ENCODE measurements at regions of chr1 and their contacts with region 1.

Region 1: GRCh38 chr1:145891587-145892485 is 6.2 kb upstream of the ANKRD35 start:
- DNase-seq: peak; percentile 98
- ATAC-seq: peak; percentile 100
- H3K4me3 Mint-ChIP-seq: peak overlapping the region; percentile 62
- H3K27ac Mint-ChIP-seq: peak overlapping the region; percentile 95
- H3K4me1 Mint-ChIP-seq: peaks cover 25% of the 10 kb centered on the region
- H3K27me3 Mint-ChIP-seq: peaks cover 15% of the 10 kb centered on the region
- CTCF ChIP-seq: peak; percentile 85

Region 2: GRCh38 chr1:145740266-145740665 is 151.6 kb before region 1 on chr1:
- CTCF ChIA-PET with region 1: no interaction called
- POLR2A ChIA-PET with region 1: no interaction called
- DNase-seq: no peak
- ATAC-seq: no peak
- H3K4me3 Mint-ChIP-seq: no peak overlapping the region
- H3K27ac Mint-ChIP-seq: no peak overlapping the region
- H3K4me1 Mint-ChIP-seq: no peaks in the 10 kb centered on the region
- H3K27me3 Mint-ChIP-seq: no peaks in the 10 kb centered on the region
- CTCF ChIP-seq: no peak

Region 3: DNA sequence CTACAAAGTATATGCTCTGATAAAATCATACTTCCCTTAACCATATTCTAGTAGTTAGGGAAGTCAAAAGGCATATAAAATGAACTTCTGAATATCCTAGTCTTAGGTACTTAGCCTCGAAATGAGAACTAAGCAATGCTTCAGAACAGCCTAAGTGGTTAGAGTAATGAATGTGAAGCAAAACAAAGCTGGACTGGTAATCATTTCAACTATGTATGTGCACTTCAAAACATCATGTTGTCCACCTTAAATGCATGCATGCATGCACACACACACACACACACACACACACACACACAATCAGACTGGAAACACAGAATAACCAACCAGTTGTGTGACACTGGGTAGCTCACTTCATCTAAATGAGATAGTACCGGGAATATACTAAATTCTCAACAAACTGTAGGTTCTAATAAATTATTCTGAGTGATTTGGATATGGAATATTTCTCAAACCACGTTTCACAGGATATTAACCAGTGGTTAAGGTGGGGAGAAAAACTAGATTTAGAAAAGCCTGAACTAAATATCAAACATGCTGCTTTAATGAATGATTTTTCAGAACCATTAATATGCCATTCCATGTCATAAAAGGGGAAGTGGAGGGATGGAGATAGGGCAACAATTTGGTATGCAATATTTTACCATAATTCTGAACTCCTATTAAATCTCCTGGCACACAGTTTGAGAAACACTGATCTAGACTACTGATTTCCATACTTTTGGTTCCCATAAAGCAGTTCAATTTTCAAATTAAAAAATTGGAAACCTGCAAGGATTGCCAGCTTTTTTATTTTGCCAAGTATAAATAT is 87.4 kb before region 1 on chr1:
- CTCF ChIA-PET with region 1: no interaction called
- POLR2A ChIA-PET with region 1: no interaction called
- DNase-seq: no peak
- ATAC-seq: no peak
- H3K4me3 Mint-ChIP-seq: no peak overlapping the region
- H3K27ac Mint-ChIP-seq: peak overlapping the region; percentile 48; the same call in 1 of the 2 replicates
- H3K4me1 Mint-ChIP-seq: peaks cover 36% of the 10 kb centered on the region
- H3K27me3 Mint-ChIP-seq: no peaks in the 10 kb centered on the region; the same call in 1 of the 2 replicates
- CTCF ChIP-seq: no peak

Region 4: GRCh38 chr1:145823565-145824498 is 68.0 kb before region 1 on chr1 and contains the starts of genes POLR3C and RNF115:
- CTCF ChIA-PET with region 1: no interaction called
- POLR2A ChIA-PET with region 1: no interaction called
- DNase-seq: peak; percentile 92
- ATAC-seq: peak; percentile 95
- H3K4me3 Mint-ChIP-seq: peak within 1 kb of the TSS; percentile 93
- H3K27ac Mint-ChIP-seq: peak within 1 kb of the TSS; percentile 99
- H3K4me1 Mint-ChIP-seq: peaks cover 5% of the 10 kb centered on the region
- H3K27me3 Mint-ChIP-seq: no peaks in the 10 kb centered on the region
- CTCF ChIP-seq: no peak
- total RNA-seq, gene POLR3C: 20.2 to 24.9 TPM (median 22.7 TPM) in 3 replicates
- total RNA-seq, gene RNF115: 8.1 to 9.2 TPM (median 9.0 TPM) in 3 replicates

Region 5: DNA sequence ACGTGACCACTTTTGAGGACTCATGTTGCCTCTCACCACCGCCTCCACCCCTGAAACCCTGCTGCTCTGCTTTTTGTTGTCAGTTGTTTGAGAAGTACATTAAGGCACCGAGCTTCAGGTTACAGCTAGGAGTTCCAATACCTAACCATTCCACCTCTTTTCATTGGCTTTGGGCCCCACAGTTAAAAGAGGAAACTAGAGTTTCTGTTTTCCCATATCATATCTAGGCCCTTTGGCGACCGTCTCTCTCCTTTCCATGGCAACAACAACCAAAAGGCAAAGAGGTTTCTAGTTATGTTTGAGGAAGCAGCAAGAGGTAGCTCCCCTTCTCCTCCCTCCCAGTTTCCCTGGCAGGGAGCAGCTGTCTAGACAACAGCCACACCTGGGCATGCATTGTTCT is 12.1 kb before region 1 on chr1:
- CTCF ChIA-PET with region 1: interaction called, 45 read pairs
- POLR2A ChIA-PET with region 1: no interaction called
- DNase-seq: no peak
- ATAC-seq: peak; percentile 73
- H3K4me3 Mint-ChIP-seq: no peak overlapping the region
- H3K27ac Mint-ChIP-seq: peak overlapping the region; percentile 76
- H3K4me1 Mint-ChIP-seq: peaks cover 21% of the 10 kb centered on the region
- H3K27me3 Mint-ChIP-seq: peaks cover 36% of the 10 kb centered on the region
- CTCF ChIP-seq: no peak

Region 6: DNA sequence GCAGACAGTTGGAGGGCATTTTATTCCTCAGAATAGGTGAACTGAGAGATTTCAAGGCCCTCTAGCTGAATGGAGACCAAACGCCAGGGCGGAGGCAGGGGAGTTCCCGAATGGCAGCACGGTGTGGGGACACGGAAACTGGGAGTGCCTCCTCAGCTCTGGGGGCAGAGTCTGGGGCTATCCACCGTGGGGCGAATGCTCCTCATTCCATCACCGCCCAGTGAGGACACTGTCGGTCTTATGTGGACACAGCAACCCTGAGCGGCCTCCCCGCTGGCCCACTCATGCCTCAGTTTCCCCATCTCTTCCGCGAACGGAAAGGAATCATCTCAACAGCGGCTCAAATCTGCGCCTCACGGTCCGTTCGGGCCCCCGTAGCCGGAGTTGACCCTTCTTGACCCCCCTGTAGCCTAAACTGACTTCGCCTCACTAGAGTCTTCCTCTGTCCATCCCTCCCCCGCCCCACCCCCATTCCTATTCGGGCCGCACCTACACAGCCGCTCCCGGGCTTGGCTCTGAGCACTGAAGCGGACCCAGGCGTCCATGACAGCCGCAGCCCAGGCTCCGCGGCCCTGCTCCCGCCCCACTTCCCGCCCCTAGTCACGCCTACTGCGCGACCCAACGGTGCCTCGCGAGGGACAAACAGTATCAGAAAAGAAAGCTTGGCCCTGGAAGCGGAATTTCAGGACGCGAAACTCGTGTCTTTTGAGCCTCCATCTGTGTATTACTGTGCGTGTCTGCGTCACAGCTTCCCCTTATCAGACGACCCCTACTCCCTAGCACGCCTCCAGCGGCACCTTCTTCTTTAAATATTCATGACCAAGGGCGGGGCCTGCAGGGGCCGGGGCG is 26.5 kb after region 1 on chr1 and contains the start of gene PEX11B:
- CTCF ChIA-PET with region 1: interaction called, 17 read pairs
- POLR2A ChIA-PET with region 1: no interaction called
- DNase-seq: peak; percentile 87
- ATAC-seq: peak; percentile 89
- H3K4me3 Mint-ChIP-seq: peak within 1 kb of the TSS; percentile 86
- H3K27ac Mint-ChIP-seq: peak within 1 kb of the TSS; percentile 78
- H3K4me1 Mint-ChIP-seq: peaks cover 19% of the 10 kb centered on the region
- H3K27me3 Mint-ChIP-seq: peaks cover 10% of the 10 kb centered on the region
- CTCF ChIP-seq: no peak
- total RNA-seq, gene PEX11B: 10.9 to 12.5 TPM (median 11.8 TPM) in 3 replicates

Region 7: DNA sequence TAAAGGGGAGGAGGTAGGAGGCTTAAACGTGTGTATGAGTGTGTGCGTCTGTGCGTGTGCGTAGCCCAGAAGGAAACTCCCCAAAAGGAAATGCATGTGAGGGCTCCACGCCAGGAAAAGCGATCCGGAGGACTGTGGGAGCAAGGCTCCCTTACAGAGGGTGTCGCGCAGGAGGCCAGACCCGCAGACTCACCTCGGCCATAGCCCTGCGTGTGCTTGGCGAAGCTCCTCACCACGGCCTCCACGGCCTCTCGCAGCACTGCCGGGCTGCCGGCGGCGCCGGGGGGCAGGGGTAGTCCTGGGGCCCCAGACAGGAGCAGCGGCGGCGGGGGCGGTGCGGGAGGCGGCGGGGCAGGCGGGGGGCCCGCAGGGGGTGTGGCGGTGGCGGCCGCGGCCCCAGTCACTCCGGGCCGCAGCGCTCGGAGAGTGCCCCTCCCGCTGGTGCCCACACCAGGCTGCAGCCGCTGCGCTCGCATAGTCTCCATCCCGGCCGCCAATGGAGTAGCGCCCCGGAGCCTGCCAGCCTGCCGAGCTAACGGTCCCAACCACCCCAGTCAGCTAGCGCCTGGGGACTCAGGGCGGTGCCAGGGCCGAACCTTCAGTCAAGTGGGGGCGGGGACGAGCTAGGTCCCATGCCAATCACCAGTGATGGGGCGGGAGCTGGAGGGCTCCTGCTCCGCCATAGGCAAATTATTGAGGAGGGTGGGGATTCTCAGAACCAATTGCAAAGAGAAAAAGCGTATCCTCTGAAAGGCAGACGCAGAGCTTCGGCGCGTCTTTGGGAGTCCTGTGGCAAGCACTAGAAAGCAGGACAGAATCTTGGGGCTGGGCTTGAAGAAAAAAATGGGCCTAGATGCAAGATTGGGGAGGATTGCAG is 65.8 kb after region 1 on chr1 and contains the start of gene LIX1L:
- CTCF ChIA-PET with region 1: interaction called, 17 read pairs
- POLR2A ChIA-PET with region 1: no interaction called
- DNase-seq: peak; percentile 96
- ATAC-seq: peak; percentile 86
- H3K4me3 Mint-ChIP-seq: peak within 1 kb of the TSS; percentile 70
- H3K27ac Mint-ChIP-seq: peak within 1 kb of the TSS; percentile 14; the same call in 1 of the 2 replicates
- H3K4me1 Mint-ChIP-seq: peaks cover 31% of the 10 kb centered on the region
- H3K27me3 Mint-ChIP-seq: peaks cover 92% of the 10 kb centered on the region
- CTCF ChIP-seq: no peak
- total RNA-seq, gene LIX1L: 3.0 to 3.8 TPM (median 3.8 TPM) in 3 replicates

Region 8: GRCh38 chr1:145978854-145979759 is 87.3 kb after region 1 on chr1:
- CTCF ChIA-PET with region 1: interaction called, 54 read pairs
- POLR2A ChIA-PET with region 1: interaction called, 5 read pairs
- DNase-seq: peak; percentile 80
- ATAC-seq: peak; percentile 93
- H3K4me3 Mint-ChIP-seq: no peak overlapping the region
- H3K27ac Mint-ChIP-seq: no peak overlapping the region
- H3K4me1 Mint-ChIP-seq: peaks cover 18% of the 10 kb centered on the region
- H3K27me3 Mint-ChIP-seq: no peaks in the 10 kb centered on the region; the same call in 1 of the 2 replicates
- CTCF ChIP-seq: no peak

Region 9: GRCh38 chr1:146012737-146013403 is 121.0 kb after region 1 on chr1:
- CTCF ChIA-PET with region 1: interaction called, 29 read pairs
- POLR2A ChIA-PET with region 1: no interaction called
- DNase-seq: no peak
- ATAC-seq: no peak
- H3K4me3 Mint-ChIP-seq: no peak overlapping the region
- H3K27ac Mint-ChIP-seq: no peak overlapping the region
- H3K4me1 Mint-ChIP-seq: no peaks in the 10 kb centered on the region
- H3K27me3 Mint-ChIP-seq: peaks cover 21% of the 10 kb centered on the region
- CTCF ChIP-seq: no peak

Measured in WTC11 (cell line).